CD8-positive, alpha-beta T cell (primary cell): ENCODE measurements at regions of chr17 and their contacts with region 1.

Region 1: DNA sequence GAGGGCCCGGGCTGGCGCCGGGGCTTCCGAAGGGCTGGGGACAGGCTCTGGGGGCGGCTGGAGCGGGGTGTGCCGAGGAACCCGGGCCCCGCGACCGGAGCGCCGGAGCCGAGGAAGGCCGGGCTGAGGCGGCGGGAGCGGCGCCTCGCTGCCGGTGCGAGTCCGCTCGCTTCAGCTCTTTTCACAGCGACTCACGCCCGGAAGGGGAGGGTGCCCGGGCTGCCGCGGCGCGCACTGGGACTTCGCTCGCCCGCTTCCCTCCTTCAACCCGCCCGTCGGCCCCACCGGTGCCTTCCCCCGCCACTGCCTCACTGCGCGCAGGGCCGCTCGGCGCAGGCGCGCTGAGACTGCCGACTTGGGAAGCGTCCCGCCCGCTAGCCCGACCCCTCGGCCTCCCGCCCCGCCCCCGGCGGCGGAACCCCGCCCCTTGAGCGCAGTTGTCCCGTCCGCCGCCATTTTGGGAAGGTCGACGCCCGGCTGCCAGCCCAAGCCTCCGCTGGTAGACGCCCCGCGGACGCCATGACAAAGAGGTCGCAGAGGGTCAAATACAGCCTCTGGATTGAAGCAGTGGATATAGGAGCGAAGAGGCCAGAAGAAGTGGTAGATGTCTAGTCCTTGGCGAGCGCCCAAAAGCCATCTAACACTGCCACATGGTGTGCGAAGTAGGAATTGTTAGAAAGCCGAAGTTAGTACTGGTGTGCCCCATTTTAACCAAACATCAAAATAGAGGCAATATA is at the start of gene UBE2G1:
- DNase-seq: peak; percentile 97 to 100 (median 99)
- ATAC-seq: peak; percentile 86
- H3K4me3 ChIP-seq: peak within 1 kb of the TSS; percentile 53 to 64
- H3K4me3 Mint-ChIP-seq: peak within 1 kb of the TSS; percentile 82
- H3K27ac ChIP-seq: peak within 1 kb of the TSS; percentile 63 to 70
- H3K27ac Mint-ChIP-seq: peak within 1 kb of the TSS; percentile 92
- H3K4me1 ChIP-seq: peaks cover 28% of the 10 kb centered on the region
- H3K4me1 Mint-ChIP-seq: peaks cover 24% of the 10 kb centered on the region
- H3K27me3 ChIP-seq: no peaks in the 10 kb centered on the region
- H3K27me3 Mint-ChIP-seq: no peaks in the 10 kb centered on the region
- CTCF ChIP-seq: no peak
- total RNA-seq, gene UBE2G1: 65.8 to 68.0 TPM

Region 2: DNA sequence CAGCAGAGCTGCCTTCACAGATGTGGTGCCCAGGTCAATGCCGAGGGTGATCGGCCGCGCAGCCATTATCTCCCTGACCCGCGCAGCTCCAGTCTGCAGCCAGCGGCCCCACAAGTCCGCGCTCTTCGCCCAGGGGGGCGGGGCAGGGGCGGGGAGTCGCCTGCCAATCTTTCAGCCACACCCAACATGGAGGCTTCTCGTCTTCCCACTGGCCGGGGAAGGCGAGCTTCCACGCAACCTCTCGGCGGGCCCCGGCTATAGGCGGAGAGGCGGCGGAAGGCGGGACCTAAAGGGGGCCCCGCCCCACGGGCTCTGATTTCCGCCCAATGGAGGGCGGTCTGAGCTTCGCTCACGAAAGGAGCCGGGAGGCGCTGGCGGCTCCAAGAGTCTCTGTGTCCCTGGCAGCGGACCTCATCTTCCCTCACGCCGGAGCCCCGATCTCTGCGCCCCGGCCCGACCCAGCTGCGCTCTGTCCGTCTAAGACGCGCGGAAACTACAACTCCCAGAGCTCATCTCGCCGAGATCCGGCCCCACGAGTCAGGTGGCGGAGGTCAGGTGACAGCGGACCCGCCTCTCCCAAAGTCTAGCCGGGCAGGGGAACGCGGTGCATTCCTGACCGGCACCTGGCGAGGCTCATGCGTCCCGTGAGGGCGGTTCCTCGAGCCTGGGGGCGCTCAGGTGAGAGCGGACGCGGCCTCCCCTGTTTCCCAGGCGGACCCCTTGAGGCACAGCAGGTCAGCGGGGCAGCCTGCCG is 730.2 kb before region 1 on chr17 and contains the starts of genes CTNS and SHPK:
- CTCF ChIA-PET with region 1: no interaction called
- POLR2A ChIA-PET with region 1: no interaction called
- intact Hi-C with region 1: loop called in 1 of 2 experiments (anchors 10 kb)
- DNase-seq: peak; percentile 86 to 96 (median 94)
- ATAC-seq: peak; percentile 98
- H3K4me3 ChIP-seq: peak within 1 kb of the TSS; percentile 93 to 94
- H3K4me3 Mint-ChIP-seq: peak within 1 kb of the TSS; percentile 97
- H3K27ac ChIP-seq: peak within 1 kb of the TSS; percentile 90 to 99
- H3K27ac Mint-ChIP-seq: peak within 1 kb of the TSS; percentile 99
- H3K4me1 ChIP-seq: peaks cover 8% of the 10 kb centered on the region
- H3K4me1 Mint-ChIP-seq: peaks cover 26% of the 10 kb centered on the region
- H3K27me3 ChIP-seq: no peaks in the 10 kb centered on the region
- H3K27me3 Mint-ChIP-seq: no peaks in the 10 kb centered on the region
- CTCF ChIP-seq: no peak
- total RNA-seq, gene CTNS: 3.1 to 4.2 TPM
- total RNA-seq, gene SHPK: 2.4 to 3.0 TPM

Region 3: GRCh38 chr17:3965118-3965803 is 401.2 kb before region 1 on chr17:
- CTCF ChIA-PET with region 1: no interaction called
- POLR2A ChIA-PET with region 1: no interaction called
- intact Hi-C with region 1: loop called in 1 of 2 experiments (anchors 2 kb)
- DNase-seq: peak; percentile 33 to 81 (median 73)
- ATAC-seq: peak; percentile 51
- H3K4me3 ChIP-seq: peak overlapping the region; percentile 71 to 83
- H3K4me3 Mint-ChIP-seq: peak overlapping the region; percentile 91
- H3K27ac ChIP-seq: peak overlapping the region; percentile 76 to 77
- H3K27ac Mint-ChIP-seq: peak overlapping the region; percentile 94
- H3K4me1 ChIP-seq: peaks cover 39% of the 10 kb centered on the region
- H3K4me1 Mint-ChIP-seq: peaks cover 40% of the 10 kb centered on the region
- H3K27me3 ChIP-seq: no peaks in the 10 kb centered on the region
- H3K27me3 Mint-ChIP-seq: no peaks in the 10 kb centered on the region
- CTCF ChIP-seq: no peak

Region 4: GRCh38 chr17:4304417-4305027 is 62.0 kb before region 1 on chr17:
- CTCF ChIA-PET with region 1: interaction called, 3 read pairs
- POLR2A ChIA-PET with region 1: no interaction called
- intact Hi-C with region 1: loop called (anchors 2 to 5 kb)
- DNase-seq: peak in 8 of 9 experiments; percentile 23 to 76 (median 56)
- ATAC-seq: peak; percentile 79
- H3K4me3 ChIP-seq: no peak overlapping the region
- H3K4me3 Mint-ChIP-seq: no peak overlapping the region
- H3K27ac ChIP-seq: no peak overlapping the region
- H3K27ac Mint-ChIP-seq: no peak overlapping the region
- H3K4me1 ChIP-seq: peaks cover 6% of the 10 kb centered on the region
- H3K4me1 Mint-ChIP-seq: peaks cover 22% of the 10 kb centered on the region
- H3K27me3 ChIP-seq: no peaks in the 10 kb centered on the region
- H3K27me3 Mint-ChIP-seq: no peaks in the 10 kb centered on the region
- CTCF ChIP-seq: peak; percentile 80

Region 5: DNA sequence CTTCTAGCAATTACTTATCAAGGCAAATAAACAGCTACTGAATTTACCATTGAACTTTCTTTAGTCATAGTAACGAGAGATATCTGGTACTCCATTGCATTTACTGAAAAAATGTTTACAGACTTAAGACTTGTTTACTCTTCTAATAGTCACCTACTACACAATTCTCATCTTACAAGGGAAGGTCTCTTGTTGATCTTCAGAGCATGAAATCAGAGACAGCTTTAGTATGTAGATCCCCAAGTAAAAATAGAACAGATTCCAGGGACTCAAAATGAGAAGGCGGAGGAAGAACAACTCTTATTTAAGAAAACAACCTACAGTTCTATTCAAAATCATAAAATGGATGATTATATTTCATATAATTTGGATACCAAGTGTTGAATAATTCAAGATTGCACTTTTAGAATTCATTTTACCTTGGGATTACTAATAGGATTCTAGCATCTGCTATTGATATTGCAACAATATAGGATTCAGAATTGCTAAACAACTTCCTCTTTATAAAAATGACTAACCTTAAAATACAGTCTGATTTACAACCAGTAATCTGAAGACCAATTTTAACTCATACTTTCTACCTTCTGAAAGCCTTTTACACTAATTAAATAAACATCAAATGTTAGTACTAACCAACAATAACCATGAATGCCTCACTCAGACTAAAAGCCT is 20.8 kb before region 1 on chr17:
- CTCF ChIA-PET with region 1: no interaction called
- POLR2A ChIA-PET with region 1: no interaction called
- intact Hi-C with region 1: no loop called
- DNase-seq: no peak
- ATAC-seq: no peak
- H3K4me3 ChIP-seq: no peak overlapping the region
- H3K4me3 Mint-ChIP-seq: no peak overlapping the region
- H3K27ac ChIP-seq: no peak overlapping the region
- H3K27ac Mint-ChIP-seq: no peak overlapping the region
- H3K4me1 ChIP-seq: peaks cover 16% of the 10 kb centered on the region
- H3K4me1 Mint-ChIP-seq: peaks cover 39% of the 10 kb centered on the region
- H3K27me3 ChIP-seq: no peaks in the 10 kb centered on the region
- H3K27me3 Mint-ChIP-seq: no peaks in the 10 kb centered on the region
- CTCF ChIP-seq: no peak

Region 6: GRCh38 chr17:4733073-4733531 is 366.6 kb after region 1 on chr17:
- CTCF ChIA-PET with region 1: no interaction called
- POLR2A ChIA-PET with region 1: no interaction called
- intact Hi-C with region 1: loop called in 1 of 2 experiments (anchors 5 kb)
- DNase-seq: peak in 1 of 9 experiments; percentile 45
- ATAC-seq: no peak
- H3K4me3 ChIP-seq: no peak overlapping the region
- H3K4me3 Mint-ChIP-seq: peak overlapping the region; percentile 39
- H3K27ac ChIP-seq: no peak overlapping the region
- H3K27ac Mint-ChIP-seq: no peak overlapping the region
- H3K4me1 ChIP-seq: peaks cover 24% of the 10 kb centered on the region
- H3K4me1 Mint-ChIP-seq: peaks cover 30% of the 10 kb centered on the region
- H3K27me3 ChIP-seq: no peaks in the 10 kb centered on the region
- H3K27me3 Mint-ChIP-seq: no peaks in the 10 kb centered on the region
- CTCF ChIP-seq: no peak

Region 7: GRCh38 chr17:5486204-5487124 is 1120.0 kb after region 1 on chr17 and contains the start of gene MIS12:
- CTCF ChIA-PET with region 1: no interaction called
- POLR2A ChIA-PET with region 1: no interaction called
- intact Hi-C with region 1: loop called in 1 of 2 experiments (anchors 2 kb)
- DNase-seq: peak; percentile 93 to 100 (median 97)
- ATAC-seq: peak; percentile 89
- H3K4me3 ChIP-seq: peak within 1 kb of the TSS; percentile 94
- H3K4me3 Mint-ChIP-seq: peak within 1 kb of the TSS; percentile 94
- H3K27ac ChIP-seq: peak within 1 kb of the TSS; percentile 98 to 99
- H3K27ac Mint-ChIP-seq: peak within 1 kb of the TSS; percentile 95
- H3K4me1 ChIP-seq: peaks cover 28% of the 10 kb centered on the region
- H3K4me1 Mint-ChIP-seq: peaks cover 60% of the 10 kb centered on the region
- H3K27me3 ChIP-seq: no peaks in the 10 kb centered on the region
- H3K27me3 Mint-ChIP-seq: no peaks in the 10 kb centered on the region
- CTCF ChIP-seq: no peak
- total RNA-seq, gene MIS12: 21.9 to 24.4 TPM